Activated CD4-positive, alpha-beta memory T cell treated with anti-CD3 and anti-CD28 coated beads, Interleukin-2, amount 10 ng/mL, durations not matched to agents 7 days and 5 days (primary cell): ENCODE measurements at regions of chr22 and their contacts with region 1.

Region 1: DNA sequence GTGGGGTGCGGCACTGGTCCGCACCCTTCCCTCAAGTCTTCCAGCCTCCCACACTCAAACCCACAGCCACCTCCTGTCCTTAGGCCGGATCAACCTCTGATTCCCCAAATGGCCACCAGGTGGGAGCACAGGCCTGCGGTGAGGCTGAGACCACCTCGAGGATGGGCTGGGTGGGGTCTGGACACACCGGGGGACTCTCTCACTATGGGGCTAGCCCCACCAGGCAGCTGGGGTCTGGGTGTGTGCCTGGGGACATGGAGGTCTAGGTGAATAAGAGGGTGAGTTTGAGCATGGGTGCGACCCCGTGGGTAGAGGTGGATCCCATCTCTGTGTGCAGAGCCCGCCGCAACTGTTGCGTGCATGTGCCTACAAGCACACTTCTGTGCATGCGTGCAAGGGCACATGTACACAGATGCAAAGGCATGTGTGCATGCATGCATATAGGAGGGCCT is 32.6 kb downstream of the MYO18B start:
- DNase-seq: no peak
- H3K4me3 Mint-ChIP-seq: no peak overlapping the region
- H3K27ac Mint-ChIP-seq: no peak overlapping the region
- H3K4me1 Mint-ChIP-seq: peaks cover 21% of the 10 kb centered on the region
- H3K27me3 Mint-ChIP-seq: peaks cover 6% of the 10 kb centered on the region

Region 2: DNA sequence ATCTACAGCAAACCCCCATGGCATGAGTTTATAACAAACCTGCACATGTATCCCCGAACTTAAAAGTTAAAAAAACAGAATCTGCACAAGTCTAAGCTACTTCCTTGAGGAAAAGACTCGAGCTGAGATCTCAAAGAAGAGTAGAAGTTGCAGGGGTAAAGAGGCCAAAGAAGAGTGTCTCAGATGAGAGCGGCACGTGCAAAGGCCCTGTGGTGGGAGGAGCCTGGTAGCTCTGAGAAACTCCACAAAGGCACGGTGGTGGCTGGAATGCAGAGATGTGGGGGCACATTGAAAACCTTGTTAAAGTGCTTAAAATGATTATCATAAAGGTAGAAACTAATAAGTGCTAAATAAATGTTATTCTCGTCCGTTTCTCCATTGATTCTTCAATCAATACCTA is 313.3 kb before region 1 on chr22:
- CTCF ChIA-PET with region 1: interaction called, 53 read pairs
- POLR2A ChIA-PET with region 1: interaction called, 3 read pairs
- DNase-seq: no peak
- H3K4me3 Mint-ChIP-seq: no peak overlapping the region
- H3K27ac Mint-ChIP-seq: no peak overlapping the region
- H3K4me1 Mint-ChIP-seq: peaks cover 14% of the 10 kb centered on the region
- H3K27me3 Mint-ChIP-seq: no peaks in the 10 kb centered on the region

Region 3: GRCh38 chr22:25546751-25547150 is 227.8 kb before region 1 on chr22:
- CTCF ChIA-PET with region 1: interaction called, 11 read pairs
- POLR2A ChIA-PET with region 1: no interaction called
- DNase-seq: no peak
- H3K4me3 Mint-ChIP-seq: no peak overlapping the region
- H3K27ac Mint-ChIP-seq: no peak overlapping the region
- H3K4me1 Mint-ChIP-seq: peaks cover 28% of the 10 kb centered on the region
- H3K27me3 Mint-ChIP-seq: no peaks in the 10 kb centered on the region

Region 4: DNA sequence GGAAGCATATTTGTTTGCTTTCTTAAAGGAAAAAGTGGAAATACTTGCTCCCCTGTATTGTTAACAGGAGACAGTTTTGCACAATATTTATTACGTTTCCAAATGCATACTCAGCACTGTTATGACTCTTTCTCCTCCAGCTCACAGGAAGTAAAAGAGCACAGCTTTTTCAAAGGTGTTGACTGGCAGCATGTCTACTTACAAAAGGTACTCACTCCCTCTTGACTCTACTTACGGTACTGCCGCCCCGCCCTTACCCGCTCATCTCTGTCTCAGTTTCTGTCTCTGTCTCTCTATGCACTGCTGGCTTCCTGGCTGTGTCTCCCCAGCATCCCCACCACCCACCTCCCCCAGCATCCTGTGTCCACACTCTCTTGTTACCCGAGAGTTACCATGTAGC is 64.8 kb before region 1 on chr22:
- CTCF ChIA-PET with region 1: interaction called, 10 read pairs
- POLR2A ChIA-PET with region 1: no interaction called
- DNase-seq: peak; percentile 69
- H3K4me3 Mint-ChIP-seq: no peak overlapping the region
- H3K27ac Mint-ChIP-seq: peak overlapping the region; percentile 70
- H3K4me1 Mint-ChIP-seq: peaks cover 43% of the 10 kb centered on the region
- H3K27me3 Mint-ChIP-seq: no peaks in the 10 kb centered on the region

Region 5: GRCh38 chr22:25747245-25747944 is 27.2 kb before region 1 on chr22:
- CTCF ChIA-PET with region 1: interaction called, 10 read pairs
- POLR2A ChIA-PET with region 1: interaction called, 11 read pairs
- DNase-seq: no peak
- H3K4me3 Mint-ChIP-seq: no peak overlapping the region
- H3K27ac Mint-ChIP-seq: peak overlapping the region; percentile 100
- H3K4me1 Mint-ChIP-seq: peaks cover 81% of the 10 kb centered on the region
- H3K27me3 Mint-ChIP-seq: no peaks in the 10 kb centered on the region

Region 6: DNA sequence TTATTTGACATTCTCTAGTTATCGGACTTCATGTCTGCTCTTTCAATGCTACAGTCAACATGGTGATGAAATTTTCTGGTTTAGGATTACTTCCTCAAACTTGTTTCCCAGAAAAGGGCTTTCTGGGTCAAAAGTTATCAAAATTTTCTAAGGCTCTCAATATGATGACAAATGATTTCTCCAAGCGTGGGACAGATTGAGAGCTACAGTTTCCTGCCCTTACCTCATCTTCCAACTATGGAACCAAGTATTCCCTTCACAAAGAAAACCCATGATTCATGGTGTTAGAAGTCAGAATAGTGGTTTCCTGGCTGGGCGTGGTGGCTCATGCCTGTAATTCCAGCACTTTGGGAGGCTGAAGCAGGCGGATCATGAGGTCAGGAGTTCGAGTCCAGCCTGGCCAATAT is 14.8 kb before region 1 on chr22:
- CTCF ChIA-PET with region 1: interaction called, 10 read pairs
- POLR2A ChIA-PET with region 1: no interaction called
- DNase-seq: no peak
- H3K4me3 Mint-ChIP-seq: no peak overlapping the region
- H3K27ac Mint-ChIP-seq: no peak overlapping the region
- H3K4me1 Mint-ChIP-seq: peaks cover 24% of the 10 kb centered on the region
- H3K27me3 Mint-ChIP-seq: peaks cover 2% of the 10 kb centered on the region

Region 7: GRCh38 chr22:25791556-25791955 is 17.0 kb after region 1 on chr22:
- CTCF ChIA-PET with region 1: no interaction called
- POLR2A ChIA-PET with region 1: no interaction called
- DNase-seq: no peak
- H3K4me3 Mint-ChIP-seq: no peak overlapping the region
- H3K27ac Mint-ChIP-seq: no peak overlapping the region
- H3K4me1 Mint-ChIP-seq: no peaks in the 10 kb centered on the region
- H3K27me3 Mint-ChIP-seq: peaks cover 18% of the 10 kb centered on the region

Region 8: DNA sequence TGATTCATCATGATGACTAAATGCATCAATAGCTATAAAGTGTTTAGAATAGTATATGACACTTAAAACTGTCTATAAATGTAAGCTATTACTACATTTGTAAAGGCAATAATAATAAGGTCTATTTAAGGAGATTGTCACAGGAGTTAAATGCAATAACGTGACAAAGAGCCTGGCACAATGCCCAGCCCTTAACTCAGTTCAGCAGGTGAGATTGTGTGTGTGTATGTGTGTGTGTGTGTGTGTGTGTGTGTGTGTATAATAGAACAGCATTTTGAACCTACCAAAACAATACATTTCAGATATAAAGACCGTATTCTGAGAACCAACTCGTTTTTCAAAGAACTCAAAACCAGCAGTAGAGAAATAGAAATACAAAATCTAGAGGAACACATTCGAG is 144.9 kb after region 1 on chr22:
- CTCF ChIA-PET with region 1: no interaction called
- POLR2A ChIA-PET with region 1: no interaction called
- DNase-seq: no peak
- H3K4me3 Mint-ChIP-seq: no peak overlapping the region
- H3K27ac Mint-ChIP-seq: no peak overlapping the region
- H3K4me1 Mint-ChIP-seq: no peaks in the 10 kb centered on the region
- H3K27me3 Mint-ChIP-seq: peaks cover 4% of the 10 kb centered on the region